ENCODE measurements at regions of chr18 and their contacts with region 1.

Region 1: DNA sequence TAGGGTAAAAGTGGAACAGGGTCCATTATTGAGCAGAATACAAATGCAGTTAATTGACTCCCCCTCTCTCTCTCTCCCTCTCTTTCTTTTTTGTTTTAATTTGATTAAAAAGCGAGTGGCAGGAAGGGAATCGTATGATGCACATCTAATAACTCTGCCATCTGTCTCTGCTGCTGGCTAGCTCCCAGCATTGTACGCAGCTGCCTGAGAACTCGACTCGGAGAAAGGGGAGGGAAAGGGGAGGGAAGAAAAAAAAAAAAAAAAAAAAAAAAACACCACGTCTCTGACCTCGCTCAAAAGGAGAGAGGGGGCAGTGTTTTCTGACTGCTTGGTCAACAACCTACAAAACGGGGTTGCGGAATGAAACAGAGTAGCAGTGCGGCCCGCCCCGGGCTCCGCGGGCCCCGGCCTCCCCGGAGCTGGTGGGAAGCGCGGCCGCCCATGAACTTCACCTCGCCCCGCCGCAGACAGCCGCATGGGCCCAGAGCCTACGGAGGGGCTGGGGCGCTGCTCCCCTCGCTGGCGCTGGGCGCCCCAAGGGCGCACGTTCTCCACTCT is 265.7 kb downstream of the TCF4 start:
- DNase-seq: peak; percentile 65 to 93 (median 84)

Region 2: GRCh38 chr18:55422456-55423180 is 100.4 kb after region 1 on chr18:
- intact Hi-C with region 1: loop called (anchors 5 kb)
- DNase-seq: peak in 19 of 42 donors; percentile 23 to 75 (median 51)

Region 3: GRCh38 chr18:55856229-55856628 is 534.0 kb after region 1 on chr18:
- intact Hi-C with region 1: no loop called
- DNase-seq: no peak

Measured in head of caudate nucleus (tissue), 42 donors.